ENCODE measurements at regions of chr5 and their contacts with region 1.

Region 1: GRCh38 chr5:19577882-19578281 is 410.1 kb downstream of the CDH18 start:
- DNase-seq: no peak
- H3K4me3 ChIP-seq: no peak overlapping the region
- CTCF ChIP-seq: no peak
- POLR2A ChIP-seq: no peak

Region 2: GRCh38 chr5:19488786-19489185 is 89.1 kb before region 1 on chr5:
- intact Hi-C with region 1: loop called (anchors 10 kb)
- DNase-seq: no peak
- H3K4me3 ChIP-seq: no peak overlapping the region
- CTCF ChIP-seq: no peak
- POLR2A ChIP-seq: no peak

Measured in lower leg skin (tissue), 4 donors.